ENCODE measurements at regions of chr18 and their contacts with region 1.

Region 1: DNA sequence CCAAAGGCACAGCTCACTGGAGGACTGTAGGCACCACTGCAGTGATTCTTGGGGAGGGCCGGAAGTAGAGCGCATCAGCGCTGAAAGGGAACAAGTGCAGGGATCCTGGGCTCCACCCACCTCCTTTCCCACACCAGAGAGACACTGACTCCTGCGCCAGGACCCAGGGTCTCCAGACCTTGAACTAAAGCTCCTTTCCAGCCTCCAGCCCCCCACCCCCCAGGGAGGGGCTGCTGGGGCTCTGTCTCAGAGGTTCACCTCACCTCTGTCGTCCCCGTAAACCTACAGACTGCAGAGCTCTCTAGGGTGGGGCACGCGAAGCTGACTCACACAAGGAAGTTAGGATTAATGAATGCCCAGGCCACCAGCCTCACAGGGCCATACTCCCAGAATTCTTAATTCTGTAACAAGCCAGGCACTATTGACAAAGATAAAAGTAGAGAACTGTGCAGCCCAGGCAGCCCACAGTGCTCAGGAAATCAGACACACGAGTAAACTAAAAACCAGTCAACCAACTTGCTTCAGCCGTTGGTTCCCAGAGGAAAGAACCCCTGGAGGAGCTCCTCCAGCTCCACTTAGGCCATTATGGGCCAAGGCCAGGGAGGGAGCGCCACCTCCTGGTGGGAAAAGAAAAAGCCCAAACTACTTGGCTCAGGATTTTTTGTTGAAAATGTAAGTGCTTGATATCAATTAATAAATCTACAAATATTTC is 45.1 kb upstream of the ACAA2 start:
- DNase-seq: peak; percentile 71
- ATAC-seq: peak; percentile 47
- H3K4me3 Mint-ChIP-seq: no peak overlapping the region
- H3K27ac Mint-ChIP-seq: no peak overlapping the region
- H3K4me1 Mint-ChIP-seq: no peaks in the 10 kb centered on the region
- H3K27me3 Mint-ChIP-seq: no peaks in the 10 kb centered on the region

Region 2: DNA sequence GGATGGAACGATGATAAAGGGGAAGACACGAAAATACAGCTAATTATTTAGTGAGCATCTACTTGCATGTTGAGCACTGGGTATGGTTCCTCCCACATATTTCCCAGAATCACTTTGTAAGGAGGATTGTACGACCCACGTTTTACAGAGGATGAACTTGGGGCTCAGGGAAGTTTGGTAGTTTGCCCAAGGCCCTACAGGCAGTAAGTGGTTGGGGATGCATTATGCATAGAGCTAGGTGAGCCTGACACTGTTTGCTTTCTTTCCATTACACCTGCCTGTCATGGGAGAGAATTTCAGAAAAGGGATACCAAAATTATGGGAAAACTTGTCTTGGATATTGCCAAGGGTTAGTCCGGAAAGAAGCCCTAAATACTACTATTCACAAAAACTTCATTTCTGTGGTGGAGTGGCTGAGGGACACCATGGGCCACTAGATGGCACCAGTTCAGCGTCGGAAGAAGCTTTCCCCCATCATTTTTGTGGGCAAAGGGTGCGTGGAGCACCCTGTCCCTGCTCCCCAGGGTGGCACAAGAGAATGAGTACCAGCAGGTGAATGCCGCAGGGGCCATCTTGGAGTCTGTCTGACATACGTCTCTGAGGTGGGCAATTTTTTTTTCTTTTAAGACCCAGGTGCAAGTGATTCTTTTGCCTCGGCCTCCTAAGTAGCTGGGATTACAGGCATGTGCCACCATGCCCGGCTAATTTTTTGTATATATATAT is 347.9 kb before region 1 on chr18:
- CTCF ChIA-PET with region 1: interaction called, 61 read pairs
- POLR2A ChIA-PET with region 1: no interaction called
- DNase-seq: peak; percentile 59
- ATAC-seq: peak; percentile 74
- H3K4me3 Mint-ChIP-seq: no peak overlapping the region
- H3K27ac Mint-ChIP-seq: no peak overlapping the region
- H3K4me1 Mint-ChIP-seq: no peaks in the 10 kb centered on the region
- H3K27me3 Mint-ChIP-seq: peaks cover 18% of the 10 kb centered on the region

Region 3: GRCh38 chr18:49561289-49562193 is 296.9 kb before region 1 on chr18 and contains the start of gene LIPG:
- CTCF ChIA-PET with region 1: interaction called, 60 read pairs
- POLR2A ChIA-PET with region 1: no interaction called
- DNase-seq: peak; percentile 66
- ATAC-seq: peak; percentile 84
- H3K4me3 Mint-ChIP-seq: peak within 1 kb of the TSS; percentile 56
- H3K27ac Mint-ChIP-seq: no peak within 1 kb of the TSS
- H3K4me1 Mint-ChIP-seq: peaks cover 27% of the 10 kb centered on the region
- H3K27me3 Mint-ChIP-seq: peaks cover 71% of the 10 kb centered on the region
- total RNA-seq, gene LIPG: 0.11 TPM in 1 of 2 experiments, not detected in the other

Region 4: DNA sequence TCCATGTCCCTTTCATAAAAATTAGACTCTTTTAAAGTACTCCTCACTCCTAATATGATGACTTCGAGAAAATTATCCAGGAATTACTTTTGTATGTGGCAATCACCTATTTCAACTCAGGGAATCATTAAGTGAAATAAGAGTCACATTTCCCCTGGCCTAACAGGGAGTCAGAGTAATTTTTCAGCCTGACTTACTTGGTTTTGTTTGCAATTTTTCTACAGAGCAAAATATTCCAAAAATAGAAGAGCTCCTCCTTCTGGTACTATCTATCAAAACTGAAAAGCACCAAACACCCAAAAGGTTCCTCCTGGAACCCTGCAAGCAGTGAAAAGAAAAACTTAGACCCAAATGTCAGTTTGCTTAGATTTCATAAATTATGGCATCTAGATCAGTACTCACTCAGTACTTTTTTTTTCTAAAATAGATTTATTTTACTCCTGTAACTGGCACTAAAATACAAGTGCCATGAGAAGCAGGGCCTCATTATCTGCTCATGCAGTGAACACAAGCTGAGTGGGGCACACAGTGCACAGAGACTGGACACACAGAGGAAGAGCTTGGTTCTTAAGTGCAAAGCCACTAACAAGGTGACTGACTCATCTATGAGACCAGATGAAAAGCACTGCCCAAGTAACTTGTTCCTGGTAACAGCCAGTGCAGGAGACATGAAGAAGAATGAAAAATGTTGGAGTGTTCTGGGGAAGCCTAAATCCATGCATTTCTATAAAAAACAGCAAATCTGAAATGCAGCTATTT is 73.9 kb before region 1 on chr18:
- CTCF ChIA-PET with region 1: interaction called, 22 read pairs
- POLR2A ChIA-PET with region 1: no interaction called
- DNase-seq: no peak
- ATAC-seq: no peak
- H3K4me3 Mint-ChIP-seq: no peak overlapping the region
- H3K27ac Mint-ChIP-seq: peak overlapping the region; percentile 18
- H3K4me1 Mint-ChIP-seq: peaks cover 46% of the 10 kb centered on the region
- H3K27me3 Mint-ChIP-seq: no peaks in the 10 kb centered on the region

Region 5: GRCh38 chr18:49813069-49813318 is 45.5 kb before region 1 on chr18:
- CTCF ChIA-PET with region 1: interaction called, 11 read pairs
- POLR2A ChIA-PET with region 1: interaction called, 3 read pairs
- DNase-seq: no peak
- ATAC-seq: peak; percentile 12
- H3K4me3 Mint-ChIP-seq: peak overlapping the region; percentile 98
- H3K27ac Mint-ChIP-seq: peak overlapping the region; percentile 99
- H3K4me1 Mint-ChIP-seq: peaks cover 60% of the 10 kb centered on the region
- H3K27me3 Mint-ChIP-seq: no peaks in the 10 kb centered on the region

Region 6: GRCh38 chr18:49819823-49820671 is 38.4 kb before region 1 on chr18:
- CTCF ChIA-PET with region 1: interaction called, 30 read pairs
- POLR2A ChIA-PET with region 1: interaction called, 3 read pairs
- DNase-seq: peak; percentile 72
- ATAC-seq: peak; percentile 83
- H3K4me3 Mint-ChIP-seq: peak overlapping the region; percentile 66
- H3K27ac Mint-ChIP-seq: peak overlapping the region; percentile 93
- H3K4me1 Mint-ChIP-seq: peaks cover 72% of the 10 kb centered on the region
- H3K27me3 Mint-ChIP-seq: no peaks in the 10 kb centered on the region

Region 7: GRCh38 chr18:50009773-50010335 is 151.4 kb after region 1 on chr18:
- CTCF ChIA-PET with region 1: no interaction called
- POLR2A ChIA-PET with region 1: no interaction called
- DNase-seq: peak; percentile 64
- ATAC-seq: peak; percentile 96
- H3K4me3 Mint-ChIP-seq: no peak overlapping the region
- H3K27ac Mint-ChIP-seq: no peak overlapping the region
- H3K4me1 Mint-ChIP-seq: peaks cover 3% of the 10 kb centered on the region
- H3K27me3 Mint-ChIP-seq: peaks cover 20% of the 10 kb centered on the region

Region 8: GRCh38 chr18:50151926-50152325 is 293.5 kb after region 1 on chr18:
- CTCF ChIA-PET with region 1: no interaction called
- POLR2A ChIA-PET with region 1: no interaction called
- DNase-seq: no peak
- ATAC-seq: no peak
- H3K4me3 Mint-ChIP-seq: no peak overlapping the region
- H3K27ac Mint-ChIP-seq: no peak overlapping the region
- H3K4me1 Mint-ChIP-seq: no peaks in the 10 kb centered on the region
- H3K27me3 Mint-ChIP-seq: peaks cover 11% of the 10 kb centered on the region